ENCODE measurements at regions of chr10 and their contacts with region 1.

Region 1: GRCh38 chr10:24724381-24725228 is 918 bp upstream of the ARHGAP21 start:
- DNase-seq: peak; percentile 98 to 99 (median 99)
- ATAC-seq: peak; percentile 91
- H3K4me3 ChIP-seq: peak overlapping the region; percentile 55
- H3K4me1 ChIP-seq: peaks cover 16% of the 10 kb centered on the region
- CTCF ChIP-seq: peak; percentile 11

Region 2: DNA sequence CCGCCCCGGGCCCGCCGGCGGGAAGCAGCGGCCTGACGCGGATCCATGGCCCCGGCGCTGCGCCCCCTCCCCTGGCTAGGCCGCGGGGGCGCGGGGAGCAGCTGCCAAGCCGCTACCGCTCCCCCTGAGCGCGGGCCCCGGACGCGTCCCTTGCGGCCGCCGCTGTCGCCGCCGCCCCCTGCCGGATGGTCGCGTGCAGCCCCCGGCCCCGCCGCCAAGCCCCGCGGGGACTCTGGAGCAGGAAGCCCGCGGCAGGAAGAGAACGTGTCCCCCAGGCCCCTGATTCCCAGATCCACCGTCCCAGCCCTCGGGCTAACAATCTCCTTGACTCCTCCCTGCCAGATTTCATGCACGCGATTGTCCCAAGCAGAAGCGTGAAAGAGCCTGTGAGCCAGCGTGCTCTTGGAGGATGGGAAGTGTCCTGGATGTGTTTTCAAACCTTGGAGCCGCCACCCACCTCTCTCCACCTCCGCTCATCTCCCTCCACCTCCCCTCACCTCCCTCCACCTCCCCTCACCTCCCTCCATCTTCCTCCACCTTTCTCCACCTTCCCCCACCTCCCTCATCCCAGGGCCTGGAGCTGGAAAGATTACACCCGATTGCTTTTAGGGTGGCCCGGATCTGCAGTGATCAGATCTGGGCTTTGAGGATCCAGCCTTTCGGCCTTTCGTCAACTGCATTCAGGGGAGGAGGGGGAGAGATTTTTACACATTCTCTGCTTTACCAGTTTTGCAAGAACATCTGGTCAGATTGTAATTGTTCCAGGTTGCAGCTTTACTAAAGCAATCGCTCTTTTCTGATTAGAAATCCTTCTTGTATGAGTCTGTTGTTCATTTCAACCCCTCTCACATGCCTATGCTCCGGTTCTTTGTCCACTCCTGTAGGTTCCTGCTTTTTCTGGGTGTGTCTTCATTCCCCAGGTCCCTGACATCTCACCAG is 228.4 kb after region 1 on chr10:
- intact Hi-C with region 1: loop called in 1 of 2 experiments (anchors 5 kb)
- DNase-seq: peak in 2 of 3 donors; percentile 48 to 70
- ATAC-seq: peak; percentile 73
- H3K4me3 ChIP-seq: peak overlapping the region; percentile 23
- H3K4me1 ChIP-seq: no peaks in the 10 kb centered on the region
- CTCF ChIP-seq: peak; percentile 28